Caco-2 (cell line): ENCODE measurements at regions of chr11 and their contacts with region 1.

Region 1: GRCh38 chr11:111299101-111300026 is 1.0 kb downstream of the POU2AF3 start:
- DNase-seq: peak; percentile 79 to 87
- H3K4me3 ChIP-seq: peak overlapping the region; percentile 76
- H3K4me3 Mint-ChIP-seq: peak overlapping the region; percentile 82
- H3K27ac Mint-ChIP-seq: peak overlapping the region; percentile 72
- H3K4me1 ChIP-seq: peaks cover 37% of the 10 kb centered on the region
- H3K4me1 Mint-ChIP-seq: peaks cover 34% of the 10 kb centered on the region
- H3K27me3 ChIP-seq: no peaks in the 10 kb centered on the region
- H3K27me3 Mint-ChIP-seq: no peaks in the 10 kb centered on the region
- CTCF ChIP-seq: peak; percentile 65 to 89

Region 2: GRCh38 chr11:111359223-111360149 is 60.1 kb after region 1 on chr11:
- CTCF ChIA-PET with region 1: interaction called, 3 read pairs
- POLR2A ChIA-PET with region 1: interaction called, 3 read pairs
- intact Hi-C with region 1: loop called (anchors 1 kb)
- DNase-seq: no peak
- H3K4me3 ChIP-seq: no peak overlapping the region
- H3K4me3 Mint-ChIP-seq: peak overlapping the region; percentile 13
- H3K27ac Mint-ChIP-seq: no peak overlapping the region
- H3K4me1 ChIP-seq: peaks cover 73% of the 10 kb centered on the region
- H3K4me1 Mint-ChIP-seq: peaks cover 41% of the 10 kb centered on the region
- H3K27me3 ChIP-seq: no peaks in the 10 kb centered on the region
- H3K27me3 Mint-ChIP-seq: no peaks in the 10 kb centered on the region
- CTCF ChIP-seq: peak in 1 of 2 experiments; percentile 11